ENCODE measurements at regions of chr10 and their contacts with region 1.

Region 1: GRCh38 chr10:96642973-96643372 is 56.2 kb upstream of the TM9SF3 start:
- DNase-seq: peak; percentile 56
- CTCF ChIP-seq: peak; percentile 70

Region 2: GRCh38 chr10:95941115-95941514 is 701.9 kb before region 1 on chr10:
- in situ Hi-C with region 1: no loop called
- DNase-seq: no peak
- CTCF ChIP-seq: no peak

Region 3: DNA sequence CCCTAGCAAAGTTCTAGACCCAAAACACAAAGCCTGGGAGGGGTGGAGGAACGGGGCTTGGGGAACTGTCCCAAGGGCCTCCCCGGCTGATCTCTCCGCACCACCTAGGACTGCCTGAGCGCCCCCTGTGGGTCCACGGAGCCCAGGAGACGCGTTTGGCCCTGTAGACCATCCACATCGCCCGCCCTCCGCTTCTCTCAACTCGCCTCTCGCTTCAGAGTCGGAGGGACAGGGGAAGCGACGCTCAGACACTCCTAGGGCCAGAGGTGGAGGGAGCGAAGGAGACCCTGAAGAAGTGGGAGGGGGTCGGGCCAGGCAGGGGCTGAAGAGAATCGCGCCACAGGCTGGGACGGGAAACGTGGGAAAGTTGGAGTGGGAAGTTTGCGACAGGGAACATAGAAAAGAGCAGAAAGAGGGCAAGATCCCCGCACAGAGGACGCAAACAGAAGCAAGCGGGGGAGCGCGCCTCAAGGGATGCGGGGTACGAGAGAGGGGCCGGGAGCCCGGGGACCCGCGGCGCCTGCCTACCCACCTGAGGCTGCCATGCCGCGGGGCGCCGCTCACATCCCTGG is 77.0 kb after region 1 on chr10:
- in situ Hi-C with region 1: loop called (anchors 5 kb)
- DNase-seq: peak; percentile 82
- CTCF ChIP-seq: peak; percentile 83

Region 4: GRCh38 chr10:96826438-96826837 is 183.5 kb after region 1 on chr10:
- in situ Hi-C with region 1: loop called (anchors 10 kb)
- DNase-seq: no peak
- CTCF ChIP-seq: no peak

Region 5: DNA sequence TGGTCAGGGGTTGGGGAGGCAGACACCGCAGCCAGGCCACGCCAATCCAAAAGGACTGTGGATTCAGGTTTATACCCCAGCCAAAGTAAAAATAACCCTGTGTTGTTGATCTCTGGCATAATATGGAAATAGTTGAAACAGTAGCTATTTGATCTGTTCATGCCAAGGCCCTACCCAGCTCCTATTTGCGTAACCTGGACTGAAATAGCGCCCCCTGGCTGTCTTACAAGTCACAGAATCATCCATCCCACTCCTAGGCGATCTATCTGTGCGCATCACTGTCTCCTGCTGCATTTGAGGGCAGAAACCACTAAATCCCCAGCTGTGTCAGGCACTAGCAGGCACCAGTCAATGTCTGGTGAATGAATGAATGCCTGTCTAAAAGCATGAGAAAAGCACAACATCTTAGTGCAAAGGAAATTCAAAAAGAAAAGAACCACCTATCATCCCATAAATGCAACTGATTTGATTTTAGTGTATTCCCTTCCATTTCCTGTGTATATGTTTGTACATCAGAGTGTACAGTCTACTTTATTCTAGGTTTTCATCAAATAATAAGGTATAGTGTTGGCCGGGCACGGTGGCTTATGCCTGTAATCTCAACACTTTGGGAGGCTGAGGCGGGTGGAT is 382.8 kb after region 1 on chr10:
- in situ Hi-C with region 1: loop called (anchors 25 kb)
- DNase-seq: peak; percentile 70
- CTCF ChIP-seq: peak; percentile 63

Measured in GM13976 (cell line).